Heart left ventricle (tissue), 16 donors: ENCODE measurements at regions of chr7 and their contacts with region 1.

Region 1: GRCh38 chr7:85104432-85105205 is 82.2 kb downstream of the SEMA3D start:
- DNase-seq: no peak
- ATAC-seq: peak in 3 of 4 donors; percentile 28 to 66 (median 45)
- H3K4me3 ChIP-seq: no peak overlapping the region
- H3K27ac ChIP-seq: peak overlapping the region in 1 of 12 donors; percentile 10
- H3K4me1 ChIP-seq: peaks cover 0 to 32% (median 11%) of the 10 kb centered on the region in 12 donors
- H3K27me3 ChIP-seq: no peaks in the 10 kb centered on the region
- CTCF ChIP-seq: no peak
- POLR2A ChIP-seq: no peak

Region 2: GRCh38 chr7:84939440-84940287 is 165.0 kb before region 1 on chr7:
- intact Hi-C with region 1: no loop called
- DNase-seq: peak in 2 of 5 donors; percentile 20 to 34
- ATAC-seq: peak in 1 of 4 donors; percentile 44
- H3K4me3 ChIP-seq: no peak overlapping the region
- H3K27ac ChIP-seq: no peak overlapping the region
- H3K4me1 ChIP-seq: no peaks in the 10 kb centered on the region
- H3K27me3 ChIP-seq: no peaks in the 10 kb centered on the region
- CTCF ChIP-seq: no peak
- POLR2A ChIP-seq: no peak

Region 3: GRCh38 chr7:85172530-85172941 is 67.9 kb after region 1 on chr7:
- intact Hi-C with region 1: loop called in 1 of 10 experiments (anchors 10 kb)
- DNase-seq: no peak
- ATAC-seq: peak in 3 of 4 donors; percentile 48 to 68 (median 55)
- H3K4me3 ChIP-seq: no peak overlapping the region
- H3K27ac ChIP-seq: peak overlapping the region in 1 of 12 donors; percentile 15
- H3K4me1 ChIP-seq: peaks cover 0 to 13% (median 0%) of the 10 kb centered on the region in 12 donors
- H3K27me3 ChIP-seq: no peaks in the 10 kb centered on the region
- CTCF ChIP-seq: no peak
- POLR2A ChIP-seq: no peak